ENCODE measurements at regions of chr1 and their contacts with region 1.

Region 1: DNA sequence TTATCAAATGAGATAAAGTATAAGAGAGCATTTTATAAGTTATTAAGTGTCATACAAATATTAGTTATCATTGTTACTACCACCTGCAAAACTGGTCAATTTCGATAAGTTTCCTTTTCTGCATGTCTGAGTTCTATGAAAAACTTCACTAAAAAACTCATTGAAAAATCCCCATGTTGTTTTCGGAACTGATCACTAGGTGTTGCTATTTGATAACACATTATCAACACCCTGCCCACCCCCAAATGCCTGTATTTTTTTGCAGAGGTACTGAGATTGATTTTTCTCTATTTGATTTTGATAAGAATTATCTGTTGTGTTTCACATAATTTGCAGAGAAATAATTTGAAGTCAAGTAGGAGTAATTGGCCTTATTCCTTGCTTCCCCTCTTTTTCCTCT is 22.1 kb upstream of the DISP1 start:
- DNase-seq: no peak
- ATAC-seq: peak; percentile 48 to 73 (median 68)
- H3K4me3 ChIP-seq: no peak overlapping the region
- H3K27ac ChIP-seq: no peak overlapping the region
- H3K4me1 ChIP-seq: no peaks in the 10 kb centered on the region
- H3K27me3 ChIP-seq: no peaks in the 10 kb centered on the region
- CTCF ChIP-seq: peak in 3 of 4 donors; percentile 33 to 39 (median 39)

Region 2: GRCh38 chr1:223081181-223081994 is 288.6 kb after region 1 on chr1:
- intact Hi-C with region 1: loop called (anchors 5 to 10 kb)
- DNase-seq: peak; percentile 82 to 97 (median 92)
- ATAC-seq: peak; percentile 96 to 99 (median 99)
- H3K4me3 ChIP-seq: peak overlapping the region in 2 of 4 donors; percentile 20 to 36
- H3K27ac ChIP-seq: peak overlapping the region in 2 of 4 donors; percentile 28 to 58
- H3K4me1 ChIP-seq: no peaks in the 10 kb centered on the region
- H3K27me3 ChIP-seq: no peaks in the 10 kb centered on the region
- CTCF ChIP-seq: peak; percentile 81 to 95 (median 92)

Region 3: GRCh38 chr1:223133824-223134435 is 341.2 kb after region 1 on chr1:
- intact Hi-C with region 1: loop called in 1 of 3 experiments (anchors 10 kb)
- DNase-seq: peak; percentile 78 to 94 (median 90)
- ATAC-seq: peak; percentile 91 to 95 (median 94)
- H3K4me3 ChIP-seq: peak overlapping the region; percentile 0 to 44 (median 20)
- H3K27ac ChIP-seq: peak overlapping the region; percentile 46 to 85 (median 56)
- H3K4me1 ChIP-seq: peaks cover 3 to 17% (median 6%) of the 10 kb centered on the region in 3 donors
- H3K27me3 ChIP-seq: no peaks in the 10 kb centered on the region
- CTCF ChIP-seq: peak in 3 of 4 donors; percentile 87 to 96 (median 94)

Region 4: DNA sequence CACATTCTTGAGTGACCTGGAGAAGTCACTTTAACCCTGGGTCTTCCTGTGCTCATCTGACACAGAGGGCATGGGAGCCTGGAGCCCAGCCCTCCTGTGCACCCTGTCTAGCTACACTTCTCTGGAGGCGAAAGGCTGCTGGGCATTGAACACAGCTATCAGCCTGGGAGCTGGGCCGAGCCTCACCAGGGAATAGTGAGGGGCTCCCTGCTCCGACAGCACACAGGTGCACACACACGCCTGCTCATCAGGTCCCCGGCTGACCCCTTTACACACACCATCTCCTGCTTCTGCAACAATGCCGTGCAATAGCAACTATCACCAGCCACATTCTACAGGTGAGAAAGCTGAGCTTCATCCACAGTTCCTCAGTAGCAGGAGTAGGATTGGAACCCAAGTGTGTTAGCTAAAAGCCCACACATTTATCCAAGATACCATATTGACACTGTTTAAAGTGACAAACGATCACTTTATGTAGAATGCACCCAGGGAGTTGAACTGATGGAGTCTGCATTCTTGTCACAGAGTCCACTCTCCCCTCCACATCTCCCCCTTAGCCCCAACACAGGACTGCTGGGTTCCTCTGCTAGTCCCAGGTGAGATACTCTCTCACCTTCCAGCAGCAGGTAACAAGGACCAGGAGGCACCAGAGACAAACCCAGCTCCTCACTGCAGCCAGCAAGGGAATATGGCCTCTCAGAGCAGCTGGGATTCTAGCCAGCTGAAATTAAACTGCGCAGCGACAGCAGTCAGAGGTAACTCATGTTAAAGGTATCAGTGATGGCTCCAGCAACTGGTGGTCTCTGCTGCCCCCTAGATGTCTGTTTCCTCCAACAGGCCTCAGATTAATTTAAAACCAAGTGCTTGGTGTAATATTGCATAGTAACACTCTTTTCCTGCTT is 891.1 kb after region 1 on chr1:
- intact Hi-C with region 1: loop called in 1 of 3 experiments (anchors 10 kb)
- DNase-seq: peak in 4 of 6 donors; percentile 49 to 82 (median 53)
- ATAC-seq: peak; percentile 67 to 95 (median 92)
- H3K4me3 ChIP-seq: no peak overlapping the region
- H3K27ac ChIP-seq: no peak overlapping the region
- H3K4me1 ChIP-seq: no peaks in the 10 kb centered on the region
- H3K27me3 ChIP-seq: no peaks in the 10 kb centered on the region
- CTCF ChIP-seq: peak in 3 of 4 donors; percentile 48 to 57 (median 48)